ENCODE measurements at regions of chr3 and their contacts with region 1.

Region 1: GRCh38 chr3:72818092-72818773 is 30.0 kb downstream of the SHQ1 start:
- DNase-seq: no peak
- ATAC-seq: peak; percentile 60

Region 2: GRCh38 chr3:70899816-70900215 is 1918.4 kb before region 1 on chr3:
- intact Hi-C with region 1: loop called (anchors 5 kb)
- DNase-seq: no peak
- ATAC-seq: no peak

Region 3: DNA sequence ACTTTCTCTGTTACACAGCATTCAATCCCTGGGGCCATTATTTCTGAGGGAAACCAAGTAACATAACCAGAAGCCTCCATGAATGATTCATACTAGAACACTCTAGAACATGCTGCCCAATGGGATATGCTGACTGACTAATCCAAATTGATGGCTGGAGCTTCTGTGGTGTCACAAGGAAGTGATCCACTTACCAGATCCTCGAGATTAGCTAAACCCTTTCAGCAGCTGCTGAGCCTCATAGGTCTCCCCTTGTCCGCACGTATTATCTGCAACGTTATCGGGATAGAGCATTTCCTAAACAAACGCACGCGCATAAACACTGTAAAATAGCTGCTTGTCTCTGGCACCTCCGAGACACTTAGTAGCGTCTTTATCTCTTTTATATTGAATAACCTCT is 972.0 kb before region 1 on chr3:
- intact Hi-C with region 1: no loop called
- DNase-seq: no peak
- ATAC-seq: no peak

Region 4: GRCh38 chr3:71875461-71875947 is 942.7 kb before region 1 on chr3:
- intact Hi-C with region 1: loop called (anchors 10 kb)
- DNase-seq: peak; percentile 85
- ATAC-seq: peak; percentile 93

Region 5: DNA sequence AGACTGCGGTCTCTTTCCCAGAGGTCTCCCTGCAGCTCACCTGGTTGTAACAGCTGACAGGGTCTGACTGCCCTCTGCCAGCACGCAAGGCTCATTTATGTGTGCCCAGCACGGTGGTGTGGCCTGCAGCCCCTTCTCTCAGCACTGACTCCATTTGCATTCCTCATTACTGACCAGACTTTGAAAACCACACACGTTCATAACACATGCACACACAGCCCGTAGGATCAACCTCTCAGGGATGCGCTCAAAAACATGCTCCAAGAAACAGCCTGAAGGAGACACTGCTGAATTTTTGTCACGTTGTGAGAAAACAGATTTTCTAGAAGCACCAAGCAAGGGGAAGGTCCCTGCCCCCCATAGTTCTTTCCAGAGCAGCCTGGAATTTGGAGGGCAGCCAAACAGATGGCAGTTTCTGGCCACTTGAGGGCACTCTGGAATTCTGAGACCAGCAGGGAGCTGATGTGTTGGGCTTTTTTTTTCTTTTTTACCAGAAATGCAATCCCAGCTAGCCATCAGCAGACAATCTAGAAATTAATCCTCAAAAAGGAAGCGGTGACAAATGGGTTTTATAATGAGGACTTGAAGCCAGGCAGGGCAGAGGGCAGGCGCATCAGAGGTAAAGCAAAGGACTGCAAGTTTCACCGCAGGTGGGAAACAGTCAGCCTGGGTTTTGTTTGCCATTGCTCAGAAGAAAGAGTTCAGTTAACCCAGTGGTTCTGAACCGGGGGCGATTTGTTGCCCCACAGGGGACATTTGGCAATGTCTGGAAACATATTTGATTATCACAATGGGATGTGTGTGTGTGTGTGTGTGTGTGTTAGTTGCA is 862.8 kb before region 1 on chr3:
- intact Hi-C with region 1: loop called (anchors 5 kb)
- DNase-seq: peak; percentile 86
- ATAC-seq: peak; percentile 83

Region 6: GRCh38 chr3:72872183-72872582 is 54.0 kb after region 1 on chr3:
- intact Hi-C with region 1: no loop called
- DNase-seq: no peak
- ATAC-seq: peak; percentile 91

Measured in sciatic nerve (tissue), 2 donors.